Right lobe of liver (tissue), 6 donors: ENCODE measurements at regions of chr10 and their contacts with region 1.

Region 1: GRCh38 chr10:30591249-30591670 is 38.3 kb downstream of the LYZL2 start:
- DNase-seq: peak in 1 of 3 donors; percentile 59
- ATAC-seq: peak; percentile 57 to 78 (median 78)
- H3K4me3 ChIP-seq: no peak overlapping the region
- H3K27ac ChIP-seq: no peak overlapping the region
- H3K4me1 ChIP-seq: peaks cover 0 to 11% (median 0%) of the 10 kb centered on the region in 4 donors
- H3K27me3 ChIP-seq: no peaks in the 10 kb centered on the region
- CTCF ChIP-seq: peak; percentile 67 to 88 (median 80)
- POLR2A ChIP-seq: no peak

Region 2: GRCh38 chr10:30398788-30399187 is 192.5 kb before region 1 on chr10:
- intact Hi-C with region 1: loop called in 1 of 2 experiments (anchors 5 kb)
- DNase-seq: no peak
- ATAC-seq: no peak
- H3K4me3 ChIP-seq: no peak overlapping the region
- H3K27ac ChIP-seq: no peak overlapping the region
- H3K4me1 ChIP-seq: no peaks in the 10 kb centered on the region
- H3K27me3 ChIP-seq: no peaks in the 10 kb centered on the region
- CTCF ChIP-seq: no peak
- POLR2A ChIP-seq: no peak

Region 3: GRCh38 chr10:30413996-30414576 is 177.2 kb before region 1 on chr10:
- intact Hi-C with region 1: loop called in 1 of 2 experiments (anchors 5 kb)
- DNase-seq: no peak
- ATAC-seq: peak; percentile 92 to 98 (median 95)
- H3K4me3 ChIP-seq: no peak overlapping the region
- H3K27ac ChIP-seq: no peak overlapping the region
- H3K4me1 ChIP-seq: no peaks in the 10 kb centered on the region
- H3K27me3 ChIP-seq: no peaks in the 10 kb centered on the region
- CTCF ChIP-seq: peak; percentile 72 to 97 (median 76)
- POLR2A ChIP-seq: no peak

Region 4: GRCh38 chr10:31536302-31536701 is 945.0 kb after region 1 on chr10:
- intact Hi-C with region 1: no loop called
- DNase-seq: no peak
- ATAC-seq: no peak
- H3K4me3 ChIP-seq: no peak overlapping the region
- H3K27ac ChIP-seq: no peak overlapping the region
- H3K4me1 ChIP-seq: no peaks in the 10 kb centered on the region
- H3K27me3 ChIP-seq: no peaks in the 10 kb centered on the region
- CTCF ChIP-seq: no peak
- POLR2A ChIP-seq: no peak